Tibial artery (tissue), 4 donors: ENCODE measurements at regions of chr1 and their contacts with region 1.

Region 1: DNA sequence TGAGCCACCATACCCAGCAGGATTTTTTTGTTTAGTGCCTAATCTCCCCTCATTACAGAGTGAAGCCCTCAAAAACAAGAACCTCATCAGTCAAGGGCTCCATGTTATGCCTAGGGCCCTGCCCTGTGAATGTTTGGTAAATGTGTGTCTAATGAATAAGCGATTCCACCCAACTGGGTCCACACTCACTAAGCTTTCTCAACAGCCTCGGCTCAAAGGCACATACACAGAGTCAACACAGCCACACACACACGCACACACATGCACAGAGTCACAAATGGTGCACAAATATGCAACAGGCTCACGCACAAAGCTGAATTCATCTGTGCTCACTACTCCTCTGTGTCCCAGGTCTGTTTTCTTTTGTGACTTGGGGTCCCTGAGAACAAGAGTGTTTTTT is 11.7 kb upstream of the SYNC start:
- DNase-seq: no peak
- H3K4me3 ChIP-seq: no peak overlapping the region
- H3K27ac ChIP-seq: no peak overlapping the region
- H3K4me1 ChIP-seq: peaks cover 0 to 12% (median 3%) of the 10 kb centered on the region in 4 donors
- H3K27me3 ChIP-seq: no peaks in the 10 kb centered on the region
- CTCF ChIP-seq: no peak

Region 2: GRCh38 chr1:32773018-32773763 is 58.9 kb after region 1 on chr1:
- intact Hi-C with region 1: loop called (anchors 2 kb)
- DNase-seq: peak; percentile 84 to 87
- H3K4me3 ChIP-seq: no peak overlapping the region
- H3K27ac ChIP-seq: no peak overlapping the region
- H3K4me1 ChIP-seq: peaks cover 0 to 20% (median 4%) of the 10 kb centered on the region in 4 donors
- H3K27me3 ChIP-seq: no peaks in the 10 kb centered on the region
- CTCF ChIP-seq: peak; percentile 91 to 94